Left colon (tissue), 2 donors: ENCODE measurements at regions of chr1 and their contacts with region 1.

Region 1: GRCh38 chr1:108828022-108828961 is 28.6 kb downstream of the AKNAD1 start:
- DNase-seq: peak; percentile 69 to 86
- ATAC-seq: peak; percentile 80

Region 2: DNA sequence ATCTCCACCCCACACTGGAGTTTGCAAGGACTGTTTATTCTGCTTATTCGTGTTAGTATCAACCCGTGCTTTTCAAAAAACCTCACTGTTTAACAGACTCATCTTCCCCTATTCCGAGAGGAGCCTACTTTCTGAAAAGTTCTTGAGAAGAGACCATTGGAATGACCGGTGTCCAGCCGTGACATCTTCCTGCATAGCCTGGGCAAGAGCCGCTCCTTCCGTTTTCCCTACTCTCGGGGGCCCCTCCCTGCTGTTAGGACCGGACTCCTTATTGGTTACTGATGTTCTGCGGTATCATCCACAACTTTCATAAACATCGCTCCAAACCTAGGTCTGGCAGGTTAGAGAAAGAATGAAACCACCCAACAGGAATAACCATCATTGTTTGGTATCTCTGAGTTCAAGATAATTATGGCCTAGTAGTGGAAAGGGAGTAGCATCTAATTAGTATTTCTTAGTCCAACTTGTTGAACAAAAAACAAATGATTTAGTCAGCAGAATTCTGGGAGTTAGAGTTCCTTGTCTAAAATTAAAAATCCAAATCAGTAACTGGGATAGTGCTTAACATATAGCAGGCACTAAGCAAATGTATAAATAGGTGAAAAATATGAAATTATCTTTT is 81.0 kb before region 1 on chr1:
- intact Hi-C with region 1: no loop called
- DNase-seq: peak; percentile 79 to 90
- ATAC-seq: peak; percentile 71

Region 3: DNA sequence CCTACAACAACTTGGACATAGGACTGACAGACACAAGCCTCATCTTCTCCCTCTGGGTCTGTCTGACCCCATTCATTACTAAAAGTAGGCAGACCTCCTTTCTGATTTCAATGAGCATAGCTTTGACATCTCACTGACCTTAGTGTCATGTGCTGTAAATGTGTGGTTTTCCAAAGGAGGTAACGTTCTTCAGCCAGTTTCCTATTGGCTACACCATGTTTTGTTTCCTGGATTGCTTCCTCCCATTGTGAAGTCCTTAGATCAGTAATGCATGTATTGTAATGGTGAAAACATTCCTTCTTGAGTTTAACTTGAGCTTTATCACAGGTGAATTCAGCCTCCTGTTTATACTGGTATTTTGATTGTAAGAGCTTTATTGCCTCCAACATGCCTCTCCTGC is 61.2 kb before region 1 on chr1:
- intact Hi-C with region 1: no loop called
- DNase-seq: no peak
- ATAC-seq: no peak

Region 4: GRCh38 chr1:108881369-108881768 is 53.1 kb after region 1 on chr1:
- intact Hi-C with region 1: loop called in 1 of 2 experiments (anchors 5 kb)
- DNase-seq: no peak
- ATAC-seq: no peak

Region 5: DNA sequence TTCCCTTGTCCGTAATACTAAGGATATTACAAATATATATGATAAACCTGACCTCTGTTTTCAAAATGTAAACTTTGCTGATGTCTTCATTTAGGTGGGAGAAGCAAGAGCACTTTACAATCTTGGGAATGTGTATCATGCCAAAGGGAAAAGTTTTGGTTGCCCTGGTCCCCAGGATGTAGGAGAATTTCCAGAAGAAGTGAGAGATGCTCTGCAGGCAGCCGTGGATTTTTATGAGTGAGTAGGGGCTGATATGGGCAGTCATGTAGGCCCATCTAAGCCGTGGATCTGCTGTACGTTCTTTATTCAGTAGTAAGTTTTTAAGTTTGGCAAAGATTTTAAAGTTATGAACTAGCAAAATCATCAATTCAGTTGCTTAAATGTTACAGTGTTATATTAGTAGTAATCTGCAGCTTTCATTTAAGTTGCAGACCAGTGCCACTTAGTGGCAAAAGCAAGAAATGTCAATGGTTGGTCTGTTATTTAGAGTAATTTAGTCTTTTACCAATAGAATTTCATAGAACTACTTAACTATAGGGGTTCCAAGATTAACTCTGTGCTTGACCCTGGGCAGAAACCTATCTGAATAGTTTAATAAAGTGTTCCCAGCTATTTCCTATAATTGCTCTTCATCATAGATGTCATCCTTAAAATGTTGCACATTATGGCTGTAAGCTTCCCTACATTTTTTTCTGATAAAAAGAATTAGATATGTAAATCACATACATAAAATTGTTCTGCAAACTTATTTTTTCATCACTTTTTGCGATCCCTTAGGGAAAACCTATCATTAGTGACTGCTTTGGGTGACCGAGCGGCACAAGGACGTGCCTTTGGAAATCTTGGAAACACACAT is 69.8 kb after region 1 on chr1:
- intact Hi-C with region 1: loop called in 1 of 2 experiments (anchors 2 kb)
- DNase-seq: no peak
- ATAC-seq: peak; percentile 71